Psoas muscle (tissue), 8 donors: ENCODE measurements at regions of chr17 and their contacts with region 1.

Region 1: DNA sequence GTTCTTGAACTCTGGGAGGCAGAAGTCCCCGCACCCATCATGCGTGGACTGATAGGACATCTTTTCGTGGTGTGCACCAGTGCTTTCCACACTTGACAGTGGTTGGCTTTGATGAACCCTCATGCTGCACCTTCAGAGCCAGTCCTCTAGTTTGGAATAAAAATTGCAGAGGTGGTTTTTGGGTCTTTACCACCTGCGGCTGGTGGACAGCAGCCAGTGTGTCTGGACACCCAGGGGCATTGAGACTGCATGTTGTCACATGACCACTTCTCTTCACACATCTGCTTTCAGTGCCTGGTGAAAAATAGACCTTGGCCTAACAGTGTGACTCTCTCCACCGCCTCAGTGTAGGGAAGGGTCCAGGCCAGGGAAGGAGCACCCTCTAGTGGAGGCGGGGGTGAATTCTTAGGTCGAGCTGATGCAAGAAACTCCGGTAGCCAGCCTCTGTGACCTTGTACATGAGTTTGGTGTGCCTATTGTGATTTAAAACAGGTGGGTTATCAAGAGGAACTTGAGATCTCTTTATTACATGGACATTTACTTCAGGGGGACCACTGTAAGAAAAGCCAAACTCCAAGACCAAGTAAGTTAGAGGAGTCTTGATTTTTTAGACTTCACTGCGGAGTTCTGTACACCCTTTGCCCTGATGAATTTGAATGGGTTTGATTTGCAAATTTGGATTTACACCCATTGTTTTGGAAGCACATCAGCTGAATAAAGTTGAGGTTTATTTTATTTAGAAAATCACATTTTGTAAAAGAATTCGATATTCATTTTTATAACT is 17.9 kb downstream of the GOSR2 start:
- DNase-seq: peak; percentile 66 to 71
- ATAC-seq: peak; percentile 76 to 82 (median 81)
- H3K4me3 ChIP-seq: no peak overlapping the region
- H3K27ac ChIP-seq: no peak overlapping the region
- H3K4me1 ChIP-seq: peaks cover 14% of the 10 kb centered on the region
- H3K27me3 ChIP-seq: no peaks in the 10 kb centered on the region
- CTCF ChIP-seq: peak; percentile 76

Region 2: GRCh38 chr17:46841561-46842379 is 99.0 kb before region 1 on chr17:
- intact Hi-C with region 1: loop called in 1 of 2 experiments (anchors 2 kb)
- DNase-seq: no peak
- ATAC-seq: peak in 3 of 4 donors; percentile 49 to 68 (median 51)
- H3K4me3 ChIP-seq: no peak overlapping the region
- H3K27ac ChIP-seq: no peak overlapping the region
- H3K4me1 ChIP-seq: no peaks in the 10 kb centered on the region
- H3K27me3 ChIP-seq: peaks cover 0 to 52% (median 8%) of the 10 kb centered on the region in 3 donors
- CTCF ChIP-seq: peak; percentile 65

Region 3: GRCh38 chr17:46995841-46996571 is 55.2 kb after region 1 on chr17:
- intact Hi-C with region 1: loop called in 1 of 2 experiments (anchors 1 kb)
- DNase-seq: no peak
- ATAC-seq: no peak
- H3K4me3 ChIP-seq: no peak overlapping the region
- H3K27ac ChIP-seq: no peak overlapping the region
- H3K4me1 ChIP-seq: no peaks in the 10 kb centered on the region
- H3K27me3 ChIP-seq: no peaks in the 10 kb centered on the region
- CTCF ChIP-seq: no peak

Region 4: GRCh38 chr17:47004906-47005305 is 64.1 kb after region 1 on chr17:
- intact Hi-C with region 1: loop called (anchors 1 to 2 kb)
- DNase-seq: no peak
- ATAC-seq: no peak
- H3K4me3 ChIP-seq: no peak overlapping the region
- H3K27ac ChIP-seq: no peak overlapping the region
- H3K4me1 ChIP-seq: no peaks in the 10 kb centered on the region
- H3K27me3 ChIP-seq: no peaks in the 10 kb centered on the region
- CTCF ChIP-seq: no peak